Natural killer cell (primary cell): ENCODE measurements at regions of chr7 and their contacts with region 1.

Region 1: GRCh38 chr7:64794171-64794844 is at the start of gene ZNF138:
- DNase-seq: peak; percentile 91 to 96
- ATAC-seq: peak; percentile 98 to 99 (median 99)
- H3K4me3 ChIP-seq: peak within 1 kb of the TSS; percentile 94
- H3K4me3 Mint-ChIP-seq: peak within 1 kb of the TSS; percentile 98
- H3K27ac ChIP-seq: peak within 1 kb of the TSS; percentile 92
- H3K27ac Mint-ChIP-seq: peak within 1 kb of the TSS; percentile 96 to 98
- H3K4me1 ChIP-seq: peaks cover 16% of the 10 kb centered on the region
- H3K4me1 Mint-ChIP-seq: peaks cover 17 to 21% of the 10 kb centered on the region in 2 donors
- H3K27me3 ChIP-seq: no peaks in the 10 kb centered on the region
- H3K27me3 Mint-ChIP-seq: peaks cover 0 to 3% of the 10 kb centered on the region in 2 donors
- CTCF ChIP-seq: no peak
- total RNA-seq, gene ZNF138: 6.0 to 11.4 (median 8.0) TPM

Region 2: GRCh38 chr7:64300641-64301040 is 493.7 kb before region 1 on chr7:
- intact Hi-C with region 1: no loop called
- DNase-seq: no peak
- ATAC-seq: no peak
- H3K4me3 ChIP-seq: no peak overlapping the region
- H3K4me3 Mint-ChIP-seq: no peak overlapping the region
- H3K27ac ChIP-seq: no peak overlapping the region
- H3K27ac Mint-ChIP-seq: no peak overlapping the region
- H3K4me1 ChIP-seq: peaks cover 5% of the 10 kb centered on the region
- H3K4me1 Mint-ChIP-seq: no peaks in the 10 kb centered on the region
- H3K27me3 ChIP-seq: no peaks in the 10 kb centered on the region
- H3K27me3 Mint-ChIP-seq: no peaks in the 10 kb centered on the region
- CTCF ChIP-seq: no peak

Region 3: GRCh38 chr7:64313740-64314491 is 480.4 kb before region 1 on chr7 and contains the start of gene ZNF736:
- intact Hi-C with region 1: loop called (anchors 10 kb)
- DNase-seq: peak; percentile 87 to 93
- ATAC-seq: peak; percentile 99 to 100 (median 100)
- H3K4me3 ChIP-seq: peak within 1 kb of the TSS; percentile 74
- H3K4me3 Mint-ChIP-seq: peak within 1 kb of the TSS; percentile 95
- H3K27ac ChIP-seq: peak within 1 kb of the TSS; percentile 70
- H3K27ac Mint-ChIP-seq: peak within 1 kb of the TSS; percentile 91 to 92
- H3K4me1 ChIP-seq: peaks cover 19% of the 10 kb centered on the region
- H3K4me1 Mint-ChIP-seq: peaks cover 23 to 36% of the 10 kb centered on the region in 2 donors
- H3K27me3 ChIP-seq: no peaks in the 10 kb centered on the region
- H3K27me3 Mint-ChIP-seq: no peaks in the 10 kb centered on the region
- CTCF ChIP-seq: no peak
- total RNA-seq, gene ZNF736: 19.6 to 26.6 (median 22.7) TPM

Region 4: GRCh38 chr7:64665980-64666662 is 128.2 kb before region 1 on chr7 and contains the start of gene ZNF107:
- intact Hi-C with region 1: loop called (anchors 1 kb)
- DNase-seq: peak; percentile 81 to 92
- ATAC-seq: peak; percentile 97 to 100 (median 98)
- H3K4me3 ChIP-seq: peak within 1 kb of the TSS; percentile 95
- H3K4me3 Mint-ChIP-seq: peak within 1 kb of the TSS; percentile 97
- H3K27ac ChIP-seq: peak within 1 kb of the TSS; percentile 93
- H3K27ac Mint-ChIP-seq: peak within 1 kb of the TSS; percentile 90 to 93
- H3K4me1 ChIP-seq: peaks cover 13% of the 10 kb centered on the region
- H3K4me1 Mint-ChIP-seq: peaks cover 30 to 44% of the 10 kb centered on the region in 2 donors
- H3K27me3 ChIP-seq: no peaks in the 10 kb centered on the region
- H3K27me3 Mint-ChIP-seq: no peaks in the 10 kb centered on the region
- CTCF ChIP-seq: no peak
- total RNA-seq, gene ZNF107: 10.3 to 13.3 (median 10.4) TPM

Region 5: GRCh38 chr7:64811767-64812166 is 17.5 kb after region 1 on chr7:
- intact Hi-C with region 1: no loop called
- DNase-seq: no peak
- ATAC-seq: no peak
- H3K4me3 ChIP-seq: no peak overlapping the region
- H3K4me3 Mint-ChIP-seq: no peak overlapping the region
- H3K27ac ChIP-seq: no peak overlapping the region
- H3K27ac Mint-ChIP-seq: peak overlapping the region; percentile 24 to 38
- H3K4me1 ChIP-seq: no peaks in the 10 kb centered on the region
- H3K4me1 Mint-ChIP-seq: peaks cover 12 to 13% of the 10 kb centered on the region in 2 donors
- H3K27me3 ChIP-seq: no peaks in the 10 kb centered on the region
- H3K27me3 Mint-ChIP-seq: no peaks in the 10 kb centered on the region
- CTCF ChIP-seq: no peak

Region 6: GRCh38 chr7:64849250-64849923 is 55.1 kb after region 1 on chr7:
- intact Hi-C with region 1: no loop called
- DNase-seq: no peak
- ATAC-seq: no peak
- H3K4me3 ChIP-seq: no peak overlapping the region
- H3K4me3 Mint-ChIP-seq: no peak overlapping the region
- H3K27ac ChIP-seq: no peak overlapping the region
- H3K27ac Mint-ChIP-seq: no peak overlapping the region
- H3K4me1 ChIP-seq: no peaks in the 10 kb centered on the region
- H3K4me1 Mint-ChIP-seq: no peaks in the 10 kb centered on the region
- H3K27me3 ChIP-seq: no peaks in the 10 kb centered on the region
- H3K27me3 Mint-ChIP-seq: no peaks in the 10 kb centered on the region
- CTCF ChIP-seq: no peak

Region 7: GRCh38 chr7:64902806-64903721 is 108.8 kb after region 1 on chr7 and contains the start of gene ZNF273:
- intact Hi-C with region 1: loop called (anchors 1 kb)
- DNase-seq: peak; percentile 92 to 94
- ATAC-seq: peak; percentile 98 to 100 (median 99)
- H3K4me3 ChIP-seq: peak within 1 kb of the TSS; percentile 67
- H3K4me3 Mint-ChIP-seq: peak within 1 kb of the TSS; percentile 97
- H3K27ac ChIP-seq: peak within 1 kb of the TSS; percentile 43
- H3K27ac Mint-ChIP-seq: peak within 1 kb of the TSS; percentile 87 to 94
- H3K4me1 ChIP-seq: peaks cover 12% of the 10 kb centered on the region
- H3K4me1 Mint-ChIP-seq: peaks cover 42 to 48% of the 10 kb centered on the region in 2 donors
- H3K27me3 ChIP-seq: no peaks in the 10 kb centered on the region
- H3K27me3 Mint-ChIP-seq: no peaks in the 10 kb centered on the region
- CTCF ChIP-seq: no peak
- total RNA-seq, gene ZNF273: 2.9 to 4.2 (median 4.0) TPM

Region 8: DNA sequence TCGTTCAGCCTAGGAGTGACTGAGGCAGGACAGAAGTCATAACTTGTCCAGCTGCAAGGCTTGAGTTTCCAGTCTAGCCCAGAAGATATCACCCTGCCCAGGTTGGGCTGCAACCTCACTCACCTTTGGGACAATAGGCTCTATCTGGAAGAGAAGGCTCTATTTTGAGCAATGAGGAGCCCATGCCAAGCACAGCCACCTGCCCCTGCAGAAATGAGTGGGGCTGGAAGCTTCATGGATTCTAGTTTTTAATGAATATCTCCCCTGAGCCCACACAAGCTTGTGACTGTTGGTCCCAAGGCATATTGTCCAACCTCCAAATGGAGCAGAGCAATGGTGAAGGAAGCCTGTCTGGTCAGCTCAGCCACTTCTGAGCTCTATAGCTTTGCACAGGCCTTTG is 151.5 kb after region 1 on chr7:
- intact Hi-C with region 1: no loop called
- DNase-seq: no peak
- ATAC-seq: no peak
- H3K4me3 ChIP-seq: no peak overlapping the region
- H3K4me3 Mint-ChIP-seq: no peak overlapping the region
- H3K27ac ChIP-seq: no peak overlapping the region
- H3K27ac Mint-ChIP-seq: no peak overlapping the region
- H3K4me1 ChIP-seq: peaks cover 10% of the 10 kb centered on the region
- H3K4me1 Mint-ChIP-seq: no peaks in the 10 kb centered on the region
- H3K27me3 ChIP-seq: peaks cover 22% of the 10 kb centered on the region
- H3K27me3 Mint-ChIP-seq: peaks cover 34 to 49% of the 10 kb centered on the region in 2 donors
- CTCF ChIP-seq: no peak

Region 9: DNA sequence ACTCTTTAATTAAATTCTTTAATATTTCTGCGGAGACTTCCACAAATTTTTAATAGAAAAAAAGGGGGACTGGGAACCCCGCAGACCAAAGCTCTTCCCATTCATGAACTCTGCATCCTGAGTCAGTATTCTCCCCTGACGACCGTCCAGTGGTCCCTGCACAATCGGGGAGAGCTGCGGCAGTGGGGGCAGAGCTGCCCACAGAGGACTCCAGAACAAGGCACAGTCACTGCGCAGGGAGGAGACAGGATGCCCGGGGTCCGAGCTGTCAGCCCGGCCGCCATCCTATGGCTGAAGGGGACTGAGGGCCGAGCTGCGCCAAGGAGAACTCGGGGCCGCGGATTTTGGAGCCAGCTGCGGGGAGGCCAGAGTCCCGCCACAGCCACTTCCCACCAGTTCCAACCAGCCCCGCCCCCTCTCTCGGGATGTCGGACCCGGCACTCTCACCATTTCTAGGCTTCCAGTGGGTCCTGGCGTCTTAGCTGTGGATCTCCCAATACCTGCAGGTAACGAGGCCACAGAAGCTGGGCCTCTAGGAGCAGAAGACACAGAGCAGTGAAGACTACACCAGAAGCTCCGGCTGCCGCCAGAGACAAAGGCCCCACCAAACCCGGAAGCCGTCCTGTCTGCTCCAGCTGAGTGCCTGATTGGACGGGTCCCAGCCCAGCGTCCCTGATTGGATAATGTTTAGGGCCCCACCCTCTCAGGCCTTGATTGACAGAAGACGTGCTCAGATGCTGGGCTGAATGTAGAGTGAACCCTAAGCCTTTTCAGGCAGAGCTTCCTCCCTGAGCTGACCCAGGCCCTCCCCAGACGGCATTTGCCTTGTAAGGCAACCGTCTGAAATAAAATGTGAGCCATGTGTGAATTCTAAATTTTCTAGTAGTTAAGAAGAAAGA is 212.0 kb after region 1 on chr7 and contains the start of gene ERV3-1:
- intact Hi-C with region 1: loop called (anchors 10 kb)
- DNase-seq: peak; percentile 90 to 95
- ATAC-seq: peak; percentile 98 to 99 (median 99)
- H3K4me3 ChIP-seq: peak within 1 kb of the TSS; percentile 85
- H3K4me3 Mint-ChIP-seq: peak within 1 kb of the TSS; percentile 95
- H3K27ac ChIP-seq: peak within 1 kb of the TSS; percentile 82
- H3K27ac Mint-ChIP-seq: peak within 1 kb of the TSS; percentile 93 to 96
- H3K4me1 ChIP-seq: peaks cover 13% of the 10 kb centered on the region
- H3K4me1 Mint-ChIP-seq: peaks cover 51 to 57% of the 10 kb centered on the region in 2 donors
- H3K27me3 ChIP-seq: no peaks in the 10 kb centered on the region
- H3K27me3 Mint-ChIP-seq: no peaks in the 10 kb centered on the region
- CTCF ChIP-seq: no peak
- total RNA-seq, gene ERV3-1: 26.3 to 35.1 (median 34.2) TPM